GM10248 (cell line): ENCODE measurements at regions of chr9 and their contacts with region 1.

Region 1: DNA sequence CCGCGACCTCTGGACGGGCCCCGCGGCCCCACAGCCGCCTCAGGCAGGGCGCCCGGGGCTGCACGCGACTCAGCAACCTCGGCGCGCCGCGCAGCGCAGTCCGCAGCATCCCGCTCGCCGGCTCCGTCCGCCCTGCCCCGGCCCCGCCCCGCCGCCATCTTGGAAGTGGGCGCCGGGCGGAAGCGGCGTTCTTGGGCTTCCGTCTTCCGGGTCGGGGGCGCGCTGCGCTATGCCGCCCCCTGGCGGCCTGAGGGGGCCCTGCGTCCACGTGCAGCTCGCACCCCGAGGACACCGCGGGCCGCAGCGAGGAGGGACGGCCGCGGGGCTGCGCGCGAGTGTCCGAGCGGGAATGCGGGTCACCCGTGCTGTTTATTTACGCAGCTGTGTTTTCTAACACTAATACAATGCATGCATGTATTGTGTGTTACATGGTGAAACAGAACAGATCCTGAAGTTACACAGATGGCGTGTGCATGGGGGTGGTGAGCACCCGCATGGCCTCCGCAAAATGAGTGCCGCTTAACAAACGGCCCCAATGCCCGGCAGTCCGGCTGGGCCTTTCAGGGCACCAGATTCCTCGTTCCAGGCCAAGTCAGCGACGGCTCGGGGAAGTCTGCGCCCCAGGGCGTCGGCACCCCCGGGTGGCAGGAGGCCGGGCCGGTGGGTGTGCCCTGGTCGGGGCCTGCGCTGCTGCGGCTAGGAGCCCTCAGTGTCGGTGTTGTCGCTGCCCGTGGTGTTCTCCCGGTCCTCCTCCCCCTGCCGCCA is at the start of gene DNLZ:
- DNase-seq: peak; percentile 96
- CTCF ChIP-seq: peak; percentile 96

Region 2: GRCh38 chr9:136273244-136273865 is 90.4 kb before region 1 on chr9:
- CTCF ChIA-PET with region 1: no interaction called
- POLR2A ChIA-PET with region 1: no interaction called
- DNase-seq: no peak
- CTCF ChIP-seq: no peak

Region 3: GRCh38 chr9:136345281-136346156 is 18.3 kb before region 1 on chr9:
- CTCF ChIA-PET with region 1: interaction called, 14 read pairs
- POLR2A ChIA-PET with region 1: no interaction called
- DNase-seq: no peak
- CTCF ChIP-seq: no peak

Region 4: GRCh38 chr9:136381311-136381710 is 17.5 kb after region 1 on chr9:
- CTCF ChIA-PET with region 1: interaction called, 39 read pairs
- POLR2A ChIA-PET with region 1: no interaction called
- DNase-seq: no peak
- CTCF ChIP-seq: no peak

Region 5: DNA sequence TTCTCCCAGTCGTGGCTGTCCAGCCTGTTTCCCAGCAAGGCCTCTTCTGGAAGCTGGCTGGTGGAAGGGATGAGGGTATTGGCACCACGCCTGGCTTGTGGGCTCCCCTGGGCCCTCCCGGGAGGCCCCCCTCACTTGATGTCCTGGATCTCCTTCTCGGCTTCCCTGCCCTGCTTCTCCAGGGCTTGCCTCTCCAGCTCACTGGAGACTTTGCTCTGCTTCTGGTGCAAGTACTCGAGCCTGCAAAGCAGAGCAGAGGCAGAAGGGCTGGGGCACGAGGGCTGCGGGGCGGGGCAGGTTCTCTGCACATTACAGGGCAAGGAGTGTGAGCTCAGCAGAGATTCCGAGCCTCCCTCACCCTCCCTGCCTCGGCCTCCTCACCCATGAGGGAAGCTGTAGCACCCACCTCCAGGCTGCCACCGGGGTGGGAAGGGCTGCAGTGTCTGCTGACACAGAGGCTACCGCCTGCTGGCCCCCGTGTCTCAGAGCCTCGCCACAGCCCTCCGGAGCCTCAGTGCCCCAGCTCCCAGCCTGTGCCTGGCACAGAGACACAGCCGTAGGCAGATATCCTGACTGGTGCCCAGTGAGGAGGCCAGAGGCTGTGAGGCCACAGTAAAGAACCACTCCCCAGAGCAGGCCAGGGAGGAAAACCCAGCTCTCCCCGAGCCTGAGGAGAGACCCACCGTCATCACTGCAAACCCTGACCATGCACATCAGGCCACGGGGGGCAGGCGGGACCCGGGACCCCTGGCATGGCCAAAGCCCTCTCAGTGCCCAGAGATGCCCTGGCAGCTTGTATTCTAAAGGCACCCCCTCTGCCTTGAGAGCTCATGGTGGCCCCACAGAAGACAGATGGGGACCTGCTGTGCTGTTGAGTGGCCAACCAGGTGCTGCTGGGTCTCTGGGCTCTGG is 29.0 kb after region 1 on chr9:
- CTCF ChIA-PET with region 1: interaction called, 17 read pairs
- POLR2A ChIA-PET with region 1: no interaction called
- DNase-seq: no peak
- CTCF ChIP-seq: no peak

Region 6: DNA sequence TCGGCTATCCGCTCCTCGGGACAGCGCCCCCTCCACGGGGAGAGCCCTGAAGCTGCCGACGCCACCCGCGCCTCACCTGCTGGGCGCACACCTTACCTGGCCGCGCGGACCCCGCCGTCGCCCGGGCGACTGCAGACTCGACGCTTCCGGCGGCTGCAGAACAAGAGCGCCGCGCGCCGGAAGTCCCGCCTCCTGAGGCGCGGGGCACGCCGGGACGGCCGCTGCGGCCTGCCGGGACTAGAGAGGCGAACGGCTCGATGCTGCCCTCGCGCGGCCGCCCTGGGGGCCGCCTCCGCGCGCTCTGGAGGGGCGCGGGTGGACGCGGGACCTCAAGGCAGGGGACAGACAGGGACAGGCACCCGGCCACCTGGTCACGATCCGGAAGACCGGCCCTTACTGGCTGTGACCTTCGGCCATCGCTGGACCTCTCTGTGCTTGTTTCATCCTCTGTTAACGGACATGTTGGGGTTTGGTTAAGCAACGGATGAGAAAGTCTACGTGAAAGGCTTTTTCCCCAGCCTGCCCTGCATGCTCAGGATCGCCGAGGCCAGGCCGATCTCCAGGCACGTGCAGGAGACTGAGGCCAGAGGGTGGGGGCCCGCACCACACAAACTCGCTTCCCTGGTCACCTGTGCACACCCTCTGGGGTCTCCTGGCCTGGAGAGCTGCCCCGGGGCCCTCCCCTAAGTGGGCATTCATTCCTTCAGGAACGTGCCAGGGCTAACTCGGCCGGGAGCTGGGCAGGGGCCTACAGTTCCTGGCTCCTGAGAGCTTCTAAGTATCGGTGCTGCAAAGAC is 36.4 kb after region 1 on chr9 and contains the start of gene SNAPC4:
- CTCF ChIA-PET with region 1: interaction called, 23 read pairs
- POLR2A ChIA-PET with region 1: interaction called, 6 read pairs
- DNase-seq: peak; percentile 97
- CTCF ChIP-seq: peak; percentile 94